A549 (cell line): ENCODE measurements at regions of chr10 and their contacts with region 1.

Region 1: DNA sequence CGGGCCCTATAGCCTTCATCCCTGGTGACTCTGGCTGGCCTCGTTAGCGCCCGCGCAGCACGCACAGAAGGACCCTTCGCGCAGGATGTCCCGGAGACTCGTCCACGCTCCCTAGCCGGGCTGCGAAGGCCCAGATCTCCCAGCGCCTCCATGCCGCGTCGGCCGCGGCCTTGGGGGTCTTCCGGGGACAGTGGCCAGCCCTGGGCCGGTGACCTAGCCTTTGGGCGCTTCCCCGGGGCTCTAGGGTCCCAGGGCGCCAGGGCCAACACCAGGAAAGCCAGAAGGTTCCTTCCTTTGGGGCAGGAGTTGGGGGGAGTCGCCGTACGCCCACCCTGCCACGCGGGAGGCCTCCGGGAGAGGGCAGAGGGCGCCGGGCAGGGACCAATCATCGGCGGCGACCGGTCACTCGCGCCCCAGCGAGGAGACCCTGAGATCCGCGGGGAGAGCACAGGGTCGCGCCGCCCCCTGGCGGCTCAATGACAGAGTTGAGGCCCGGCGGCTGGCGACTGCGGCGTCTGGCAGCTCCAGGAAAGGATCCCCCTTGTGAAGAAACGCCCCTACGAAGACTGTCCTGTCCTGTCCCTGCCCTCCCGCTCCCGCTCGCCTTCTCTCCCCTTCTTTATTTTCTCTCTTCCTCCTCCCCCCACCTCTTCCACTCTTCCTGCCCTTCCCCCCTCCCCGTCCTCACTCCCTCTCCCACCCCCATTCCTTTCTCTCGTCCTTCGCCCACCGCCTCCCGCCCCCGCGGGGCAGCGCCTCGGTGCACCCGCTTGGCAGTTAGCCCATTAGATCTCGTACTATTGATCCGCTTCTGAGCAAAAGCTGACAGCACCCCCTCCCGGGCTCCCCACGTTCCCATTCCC is 62.3 kb upstream of the LBX1 start:
- DNase-seq: peak; percentile 59 to 85
- ATAC-seq: peak; percentile 78 to 93
- H3K4me3 ChIP-seq: peak overlapping the region; percentile 63
- H3K27ac ChIP-seq: peak overlapping the region; percentile 37 to 82; a peak in 5 of 6 replicates
- H3K4me1 ChIP-seq: peaks cover 6% of the 10 kb centered on the region; the same call in 1 of the 3 replicates
- CTCF ChIP-seq: peak; percentile 79
- EP300 ChIP-seq: no peak
- POLR2A ChIP-seq: no peak
- RAD21 ChIP-seq: peak; percentile 60 to 76

Region 2: GRCh38 chr10:101258179-101258885 is 33.2 kb before region 1 on chr10:
- CTCF ChIA-PET with region 1: interaction called, 21 read pairs
- POLR2A ChIA-PET with region 1: no interaction called
- DNase-seq: peak in 1 of 2 experiments; percentile 27
- ATAC-seq: no peak
- H3K4me3 ChIP-seq: no peak overlapping the region
- H3K27ac ChIP-seq: no peak overlapping the region
- H3K4me1 ChIP-seq: no peaks in the 10 kb centered on the region
- CTCF ChIP-seq: no peak
- EP300 ChIP-seq: no peak
- POLR2A ChIP-seq: no peak
- RAD21 ChIP-seq: no peak

Region 3: DNA sequence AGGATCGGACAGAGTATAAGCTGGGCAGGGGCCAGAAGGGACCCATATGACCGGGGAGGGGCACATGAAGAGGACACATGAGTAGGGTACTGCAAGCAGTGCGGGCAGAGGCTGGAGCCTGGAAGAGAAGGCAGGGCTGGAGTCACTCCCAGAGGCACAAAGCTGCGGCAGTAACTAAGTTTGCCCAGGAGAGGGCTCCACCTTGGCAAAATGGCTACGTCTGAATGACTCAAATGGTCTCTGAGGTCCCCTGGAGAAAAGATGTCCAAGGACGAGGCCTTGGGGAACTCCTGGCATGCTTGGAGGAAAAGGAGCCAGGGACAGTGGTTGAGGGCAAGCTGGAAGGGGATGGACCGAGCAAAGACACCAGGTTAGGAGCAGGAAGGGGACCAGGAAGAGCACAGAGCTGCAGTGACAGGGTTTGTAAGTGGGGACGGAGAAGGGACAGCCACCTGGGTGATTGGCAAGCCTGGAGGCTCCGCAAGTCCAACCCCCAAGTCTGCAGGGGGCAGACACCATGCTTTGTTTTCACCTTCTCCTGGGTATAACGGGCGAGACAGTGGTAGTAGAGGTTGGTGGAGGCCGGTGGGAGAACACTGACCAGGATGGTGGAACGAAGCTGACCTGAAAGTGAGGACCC is 19.2 kb before region 1 on chr10:
- CTCF ChIA-PET with region 1: interaction called, 122 read pairs
- POLR2A ChIA-PET with region 1: no interaction called
- DNase-seq: peak; percentile 68 to 95
- ATAC-seq: peak; percentile 88 to 97
- H3K4me3 ChIP-seq: no peak overlapping the region
- H3K27ac ChIP-seq: 0 out of 6 replicates have a peak overlapping the region, but pooled peaks of 1 of the 2 experiments have one; percentile 37
- H3K4me1 ChIP-seq: peaks cover 5% of the 10 kb centered on the region; the same call in 1 of the 3 replicates
- CTCF ChIP-seq: peak; percentile 65
- EP300 ChIP-seq: no peak
- POLR2A ChIP-seq: no peak
- RAD21 ChIP-seq: peak; percentile 50 to 55; a peak in 4 of 5 replicates

Region 4: DNA sequence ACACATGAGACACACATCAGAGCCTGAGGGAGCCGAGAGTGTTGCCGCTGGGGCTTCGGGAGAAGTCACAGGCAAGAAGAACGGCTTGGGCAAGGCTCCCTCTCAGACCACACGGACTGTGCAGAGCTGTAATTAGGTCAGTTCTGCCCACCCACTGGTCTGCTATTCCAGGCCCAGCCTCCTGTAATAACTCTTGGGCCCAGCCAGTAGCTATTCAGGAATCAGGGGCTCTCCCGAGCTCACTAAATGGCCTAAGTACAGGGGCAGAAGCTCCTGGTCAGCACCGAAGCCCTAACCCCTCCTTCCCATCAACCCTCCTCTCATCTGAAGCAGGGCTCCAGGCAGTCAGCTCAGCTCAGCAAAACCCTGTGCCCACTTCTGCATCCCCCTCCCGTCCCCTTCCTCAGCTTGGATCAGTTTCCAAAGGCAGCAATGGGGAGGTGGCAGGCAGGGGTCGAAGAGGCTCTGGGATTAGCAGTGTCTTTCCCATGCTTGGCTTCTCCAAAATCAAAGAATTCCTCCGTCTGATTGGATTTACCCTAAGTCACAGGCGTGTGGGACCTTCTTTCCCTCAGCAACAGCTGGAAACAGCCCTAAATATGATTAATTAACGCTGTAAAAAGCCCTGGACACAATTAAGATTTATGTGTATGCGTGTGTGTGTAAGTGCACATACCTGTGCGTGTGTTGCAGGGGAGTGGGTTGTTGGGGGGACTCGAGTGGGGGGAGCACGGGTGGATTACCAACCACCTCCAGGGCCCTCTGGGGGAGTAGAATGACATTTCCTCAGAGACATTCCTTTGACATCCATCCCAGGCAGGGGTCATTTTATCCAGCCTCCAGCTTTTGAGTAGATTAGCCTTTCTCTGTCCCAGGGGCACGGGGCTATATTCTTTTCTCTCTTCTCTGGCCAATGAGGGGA is 14.0 kb after region 1 on chr10:
- CTCF ChIA-PET with region 1: interaction called, 36 read pairs
- POLR2A ChIA-PET with region 1: no interaction called
- DNase-seq: no peak
- ATAC-seq: no peak
- H3K4me3 ChIP-seq: no peak overlapping the region
- H3K27ac ChIP-seq: no peak overlapping the region
- H3K4me1 ChIP-seq: no peaks in the 10 kb centered on the region
- CTCF ChIP-seq: no peak
- EP300 ChIP-seq: no peak
- POLR2A ChIP-seq: no peak
- RAD21 ChIP-seq: no peak

Region 5: GRCh38 chr10:101441541-101442455 is 150.2 kb after region 1 on chr10:
- CTCF ChIA-PET with region 1: interaction called, 109 read pairs
- POLR2A ChIA-PET with region 1: no interaction called
- DNase-seq: peak; percentile 62 to 83
- ATAC-seq: peak; percentile 98 to 99
- H3K4me3 ChIP-seq: no peak overlapping the region
- H3K27ac ChIP-seq: no peak overlapping the region
- H3K4me1 ChIP-seq: peaks cover 5% of the 10 kb centered on the region; the same call in 1 of the 3 replicates
- CTCF ChIP-seq: peak; percentile 83
- EP300 ChIP-seq: no peak
- POLR2A ChIP-seq: no peak
- RAD21 ChIP-seq: peak; percentile 86 to 89

Region 6: GRCh38 chr10:101467286-101467770 is 175.8 kb after region 1 on chr10:
- CTCF ChIA-PET with region 1: interaction called, 12 read pairs
- POLR2A ChIA-PET with region 1: no interaction called
- DNase-seq: peak; percentile 69 to 76
- ATAC-seq: peak; percentile 87 to 89
- H3K4me3 ChIP-seq: no peak overlapping the region
- H3K27ac ChIP-seq: no peak overlapping the region
- H3K4me1 ChIP-seq: no peaks in the 10 kb centered on the region
- CTCF ChIP-seq: peak; percentile 71
- EP300 ChIP-seq: no peak
- POLR2A ChIP-seq: no peak
- RAD21 ChIP-seq: peak; percentile 46 to 62; a peak in 4 of 5 replicates